Esophagus muscularis mucosa (tissue), 4 donors: ENCODE measurements at regions of chr15 and their contacts with region 1.

Region 1: DNA sequence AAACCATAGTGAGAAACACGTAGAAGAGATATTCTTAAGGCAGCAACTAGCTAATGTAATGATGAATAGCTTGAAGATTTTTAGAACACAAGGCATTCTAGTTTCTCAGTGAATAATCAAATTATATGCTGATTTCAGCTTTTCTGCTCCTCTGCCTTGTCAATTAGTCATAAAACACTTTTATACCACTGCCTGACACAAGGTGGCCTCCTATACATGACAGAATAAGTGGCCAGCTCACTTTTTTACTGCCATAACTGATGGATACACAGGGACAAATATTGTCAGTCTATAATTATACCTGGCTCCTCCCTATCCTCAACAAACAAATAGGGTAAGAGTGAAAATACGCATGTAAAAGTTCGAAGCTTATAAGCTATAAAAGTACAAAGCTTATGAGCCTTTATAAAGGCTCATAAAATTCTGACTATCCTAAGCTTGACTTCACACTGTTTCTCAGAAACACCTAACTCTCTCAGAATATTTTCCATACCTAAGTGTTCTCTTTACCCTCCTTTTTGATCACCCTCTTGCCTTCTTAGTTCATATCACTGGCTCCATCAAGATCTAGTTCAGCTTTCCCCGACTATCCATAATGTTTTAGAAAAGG is 81.6 kb downstream of the HERC1 start:
- DNase-seq: no peak
- H3K4me3 ChIP-seq: no peak overlapping the region
- H3K27ac ChIP-seq: no peak overlapping the region
- H3K4me1 ChIP-seq: no peaks in the 10 kb centered on the region
- H3K27me3 ChIP-seq: no peaks in the 10 kb centered on the region
- CTCF ChIP-seq: peak; percentile 63 to 75 (median 75)
- EP300 ChIP-seq: no peak
- POLR2A ChIP-seq: no peak

Region 2: DNA sequence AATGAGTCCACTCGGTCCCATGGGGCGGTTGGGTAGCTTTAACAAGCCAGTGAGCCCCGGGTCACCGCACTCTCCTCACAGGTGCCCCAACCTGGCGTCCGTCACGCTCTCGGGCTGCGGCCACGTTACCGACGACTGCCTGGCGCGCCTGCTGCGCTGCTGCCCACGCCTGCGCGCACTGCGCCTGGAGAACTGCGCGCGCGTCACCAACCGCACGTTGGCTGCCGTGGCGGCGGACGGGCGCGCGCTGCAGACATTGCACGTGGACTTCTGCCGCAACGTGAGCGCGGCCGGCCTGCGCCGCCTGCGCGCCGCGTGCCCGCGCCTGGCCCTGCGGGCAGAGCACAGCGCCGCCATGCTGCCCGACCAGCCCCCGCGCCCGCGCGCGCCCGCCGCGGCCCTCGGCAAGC is 151.6 kb before region 1 on chr15:
- intact Hi-C with region 1: no loop called
- DNase-seq: peak; percentile 93
- H3K4me3 ChIP-seq: peak overlapping the region; percentile 75 to 78 (median 77)
- H3K27ac ChIP-seq: peak overlapping the region; percentile 88 to 91 (median 90)
- H3K4me1 ChIP-seq: peaks cover 51 to 72% (median 69%) of the 10 kb centered on the region in 4 donors
- H3K27me3 ChIP-seq: no peaks in the 10 kb centered on the region
- CTCF ChIP-seq: peak; percentile 4 to 61 (median 30)
- EP300 ChIP-seq: no peak
- POLR2A ChIP-seq: peak; percentile 55

Region 3: GRCh38 chr15:63891079-63891767 is 139.0 kb after region 1 on chr15:
- intact Hi-C with region 1: loop called (anchors 2 kb)
- DNase-seq: no peak
- H3K4me3 ChIP-seq: no peak overlapping the region
- H3K27ac ChIP-seq: no peak overlapping the region
- H3K4me1 ChIP-seq: peaks cover 1 to 14% (median 11%) of the 10 kb centered on the region in 4 donors
- H3K27me3 ChIP-seq: no peaks in the 10 kb centered on the region
- CTCF ChIP-seq: peak; percentile 76 to 93 (median 79)
- EP300 ChIP-seq: no peak
- POLR2A ChIP-seq: no peak

Region 4: DNA sequence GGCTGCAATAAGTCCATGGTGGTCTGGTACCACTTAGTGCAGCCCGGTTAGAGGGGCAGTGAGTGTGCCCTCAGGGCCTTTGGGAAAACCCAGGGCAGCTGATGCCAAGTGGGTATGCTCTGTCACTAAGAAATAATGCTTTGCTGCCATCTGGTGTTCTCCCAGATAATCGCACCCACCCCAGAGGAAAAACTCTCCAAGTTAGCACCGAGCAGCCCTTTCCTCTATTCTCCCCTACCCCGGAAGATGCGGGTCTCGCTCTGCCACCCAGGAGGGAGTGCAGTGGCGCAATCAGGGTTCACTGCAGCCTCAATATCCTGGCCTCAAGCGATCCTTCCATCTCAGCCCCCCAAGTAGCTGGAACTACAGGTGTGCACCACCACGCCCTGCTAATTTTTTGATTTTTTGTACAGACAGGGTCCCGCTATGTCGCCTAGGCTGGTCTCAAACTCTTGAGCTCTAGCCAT is 315.4 kb after region 1 on chr15:
- intact Hi-C with region 1: loop called (anchors 2 kb)
- DNase-seq: no peak
- H3K4me3 ChIP-seq: no peak overlapping the region
- H3K27ac ChIP-seq: no peak overlapping the region
- H3K4me1 ChIP-seq: peaks cover 13 to 29% (median 27%) of the 10 kb centered on the region in 4 donors
- H3K27me3 ChIP-seq: no peaks in the 10 kb centered on the region
- CTCF ChIP-seq: peak; percentile 82 to 93 (median 84)
- EP300 ChIP-seq: no peak
- POLR2A ChIP-seq: no peak